RWPE1 (cell line): ENCODE measurements at regions of chr13 and their contacts with region 1.

Region 1: DNA sequence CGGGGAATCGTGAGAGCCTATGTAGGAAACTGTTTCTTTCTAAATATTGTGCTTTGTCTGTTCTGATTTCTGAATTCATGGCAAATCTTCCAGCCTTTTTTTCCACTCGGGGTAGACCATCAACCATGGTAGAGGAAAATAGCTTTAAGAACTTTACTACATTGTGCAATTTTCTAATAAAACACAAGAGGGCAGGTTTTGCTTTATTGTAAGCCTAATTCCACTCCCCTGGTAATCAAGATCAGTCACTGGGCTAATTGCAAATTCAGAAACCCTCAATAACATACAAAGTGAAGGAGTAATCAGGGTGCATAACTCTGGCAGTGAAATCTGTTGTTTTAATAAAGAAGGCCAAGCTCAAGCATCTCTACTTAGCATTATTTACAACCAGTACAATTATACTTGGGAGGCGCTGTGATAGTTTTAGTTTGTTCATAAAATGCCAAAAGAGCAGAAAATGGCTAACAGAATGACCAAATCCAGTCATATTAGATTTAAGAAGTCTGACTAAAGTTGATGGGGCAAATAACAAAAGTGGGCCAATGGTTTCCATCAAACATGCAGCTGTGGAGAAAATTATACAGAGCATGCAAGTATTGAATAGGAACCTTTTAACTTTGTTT is 43.8 kb downstream of the DCT start:
- DNase-seq: peak; percentile 53
- H3K27ac ChIP-seq: no peak overlapping the region
- CTCF ChIP-seq: peak; percentile 71

Region 2: DNA sequence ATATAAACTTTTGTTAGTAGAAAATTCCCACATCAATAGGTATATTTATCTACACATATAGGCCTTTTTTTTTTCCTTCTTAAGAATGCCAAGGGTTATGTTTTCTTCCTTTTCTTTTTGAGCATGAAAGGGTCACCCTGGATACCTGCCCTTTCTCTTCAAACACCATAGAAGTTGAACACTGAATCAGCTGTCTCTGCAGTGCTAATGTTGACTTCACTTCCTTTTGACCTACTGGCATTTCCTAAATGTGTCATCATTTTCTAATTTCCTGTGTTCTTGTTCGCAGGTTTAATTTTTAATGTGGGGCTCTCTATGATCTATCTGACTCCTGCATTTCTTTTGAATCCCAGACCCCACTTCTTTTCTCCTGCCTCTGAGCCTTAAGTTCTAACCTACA is 677.1 kb before region 1 on chr13:
- CTCF ChIA-PET with region 1: no interaction called
- POLR2A ChIA-PET with region 1: no interaction called
- DNase-seq: peak; percentile 0
- H3K27ac ChIP-seq: no peak overlapping the region
- CTCF ChIP-seq: no peak

Region 3: DNA sequence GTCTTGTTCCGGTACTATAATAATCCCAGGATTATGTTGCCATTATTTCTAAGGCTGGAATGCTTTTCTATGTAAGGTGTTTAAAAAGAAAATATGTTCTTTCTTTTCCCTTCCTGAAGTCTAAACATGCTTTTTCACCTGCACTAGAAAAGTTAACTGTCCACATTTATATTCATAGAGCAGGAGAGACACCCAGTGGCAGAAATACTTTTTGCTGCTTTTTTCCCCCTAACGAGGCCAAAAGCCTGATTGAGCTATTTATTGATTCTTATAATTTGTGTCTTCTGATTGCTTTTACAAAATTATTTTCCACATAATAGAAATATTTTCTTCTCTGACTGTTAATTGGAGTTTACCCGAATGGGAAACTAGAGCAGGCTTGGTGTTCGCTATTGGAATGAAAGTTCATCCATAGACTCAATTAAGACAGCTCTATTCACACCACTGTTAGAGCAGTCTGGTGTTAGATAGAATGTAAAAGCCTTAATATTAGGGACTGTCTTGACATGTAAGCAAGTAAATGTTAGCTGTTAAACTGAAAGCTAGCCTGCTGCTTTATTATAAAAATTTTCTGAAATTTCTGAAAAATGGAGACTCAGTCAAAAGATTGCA is 181.8 kb after region 1 on chr13:
- CTCF ChIA-PET with region 1: interaction called, 31 read pairs
- POLR2A ChIA-PET with region 1: no interaction called
- DNase-seq: no peak
- H3K27ac ChIP-seq: no peak overlapping the region
- CTCF ChIP-seq: peak; percentile 65